ENCODE measurements at regions of chr10 and their contacts with region 1.

Region 1: GRCh38 chr10:26556748-26557640 is 118.9 kb downstream of the APBB1IP start:
- DNase-seq: peak in 7 of 9 donors; percentile 15 to 62 (median 57)
- ATAC-seq: peak; percentile 70
- H3K4me3 ChIP-seq: no peak overlapping the region
- H3K4me3 Mint-ChIP-seq: no peak overlapping the region
- H3K27ac ChIP-seq: peak overlapping the region; percentile 24
- H3K27ac Mint-ChIP-seq: peak overlapping the region; percentile 25 to 91 (median 63)
- H3K4me1 ChIP-seq: no peaks in the 10 kb centered on the region
- H3K4me1 Mint-ChIP-seq: peaks cover 11 to 38% (median 29%) of the 10 kb centered on the region in 7 donors
- H3K27me3 ChIP-seq: no peaks in the 10 kb centered on the region
- H3K27me3 Mint-ChIP-seq: no peaks in the 10 kb centered on the region

Region 2: DNA sequence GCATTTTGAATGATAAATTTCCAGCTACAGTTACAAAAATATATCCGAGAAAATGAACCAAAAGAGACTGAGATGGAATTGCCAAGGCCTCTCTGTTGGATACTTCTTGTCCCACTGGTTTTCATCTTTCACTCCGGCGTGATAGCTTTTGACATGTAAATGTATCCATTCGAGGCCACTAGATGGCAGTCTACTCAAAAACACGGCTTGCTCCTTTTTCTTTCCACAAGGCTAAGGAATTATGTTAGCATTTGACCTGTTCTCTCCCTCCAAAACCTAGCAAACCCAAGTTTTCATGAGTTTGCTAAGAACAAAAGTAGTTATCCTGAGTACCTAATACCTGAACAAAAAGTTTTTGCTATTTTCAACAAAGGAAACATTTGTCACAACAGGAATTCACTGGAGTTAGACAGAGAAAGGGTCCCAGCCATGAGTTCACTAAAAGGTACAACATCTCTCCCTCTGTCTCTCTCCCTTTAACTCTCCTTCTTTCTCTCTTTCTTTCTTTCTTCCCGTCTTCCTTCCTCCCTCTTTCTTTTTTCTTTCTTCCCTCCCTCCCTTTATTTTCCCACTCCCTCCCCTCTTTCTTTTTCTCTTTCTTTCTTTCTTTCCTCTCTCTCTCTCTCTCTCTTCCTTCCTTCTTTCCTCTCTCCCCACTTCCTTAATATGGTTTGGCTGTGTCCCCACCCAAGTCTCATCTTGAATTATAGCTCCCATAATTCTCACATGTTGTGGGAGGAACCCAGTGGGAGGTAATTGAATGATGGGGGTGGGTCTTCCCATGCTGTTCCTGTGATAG is 830.9 kb before region 1 on chr10:
- CTCF ChIA-PET with region 1: no interaction called
- POLR2A ChIA-PET with region 1: no interaction called
- intact Hi-C with region 1: loop called in 1 of 2 experiments (anchors 2 kb)
- DNase-seq: peak in 5 of 9 donors; percentile 13 to 31 (median 18)
- ATAC-seq: no peak
- H3K4me3 ChIP-seq: no peak overlapping the region
- H3K4me3 Mint-ChIP-seq: no peak overlapping the region
- H3K27ac ChIP-seq: no peak overlapping the region
- H3K27ac Mint-ChIP-seq: no peak overlapping the region
- H3K4me1 ChIP-seq: no peaks in the 10 kb centered on the region
- H3K4me1 Mint-ChIP-seq: peaks cover 0 to 3% (median 0%) of the 10 kb centered on the region in 7 donors
- H3K27me3 ChIP-seq: no peaks in the 10 kb centered on the region
- H3K27me3 Mint-ChIP-seq: peaks cover 0 to 34% (median 21%) of the 10 kb centered on the region in 5 donors

Region 3: GRCh38 chr10:26881600-26882331 is 324.8 kb after region 1 on chr10:
- CTCF ChIA-PET with region 1: interaction called, 6 read pairs
- POLR2A ChIA-PET with region 1: no interaction called
- intact Hi-C with region 1: loop called in 1 of 2 experiments (anchors 1 kb)
- DNase-seq: peak in 6 of 9 donors; percentile 23 to 60 (median 37)
- ATAC-seq: peak; percentile 87
- H3K4me3 ChIP-seq: no peak overlapping the region
- H3K4me3 Mint-ChIP-seq: no peak overlapping the region
- H3K27ac ChIP-seq: no peak overlapping the region
- H3K27ac Mint-ChIP-seq: no peak overlapping the region
- H3K4me1 ChIP-seq: no peaks in the 10 kb centered on the region
- H3K4me1 Mint-ChIP-seq: peaks cover 0 to 8% (median 0%) of the 10 kb centered on the region in 7 donors
- H3K27me3 ChIP-seq: no peaks in the 10 kb centered on the region
- H3K27me3 Mint-ChIP-seq: peaks cover 4 to 37% (median 13%) of the 10 kb centered on the region in 5 donors

Measured in naive thymus-derived CD4-positive, alpha-beta T cell (primary cell).